Aorta (tissue), 5 donors: ENCODE measurements at regions of chr6 and their contacts with region 1.

Region 1: GRCh38 chr6:90478789-90479602 is 107.9 kb downstream of the MAP3K7 start:
- DNase-seq: peak; percentile 91 to 93
- ATAC-seq: peak; percentile 97
- H3K4me3 ChIP-seq: no peak overlapping the region
- H3K27ac ChIP-seq: no peak overlapping the region
- H3K4me1 ChIP-seq: no peaks in the 10 kb centered on the region
- H3K27me3 ChIP-seq: no peaks in the 10 kb centered on the region

Region 2: DNA sequence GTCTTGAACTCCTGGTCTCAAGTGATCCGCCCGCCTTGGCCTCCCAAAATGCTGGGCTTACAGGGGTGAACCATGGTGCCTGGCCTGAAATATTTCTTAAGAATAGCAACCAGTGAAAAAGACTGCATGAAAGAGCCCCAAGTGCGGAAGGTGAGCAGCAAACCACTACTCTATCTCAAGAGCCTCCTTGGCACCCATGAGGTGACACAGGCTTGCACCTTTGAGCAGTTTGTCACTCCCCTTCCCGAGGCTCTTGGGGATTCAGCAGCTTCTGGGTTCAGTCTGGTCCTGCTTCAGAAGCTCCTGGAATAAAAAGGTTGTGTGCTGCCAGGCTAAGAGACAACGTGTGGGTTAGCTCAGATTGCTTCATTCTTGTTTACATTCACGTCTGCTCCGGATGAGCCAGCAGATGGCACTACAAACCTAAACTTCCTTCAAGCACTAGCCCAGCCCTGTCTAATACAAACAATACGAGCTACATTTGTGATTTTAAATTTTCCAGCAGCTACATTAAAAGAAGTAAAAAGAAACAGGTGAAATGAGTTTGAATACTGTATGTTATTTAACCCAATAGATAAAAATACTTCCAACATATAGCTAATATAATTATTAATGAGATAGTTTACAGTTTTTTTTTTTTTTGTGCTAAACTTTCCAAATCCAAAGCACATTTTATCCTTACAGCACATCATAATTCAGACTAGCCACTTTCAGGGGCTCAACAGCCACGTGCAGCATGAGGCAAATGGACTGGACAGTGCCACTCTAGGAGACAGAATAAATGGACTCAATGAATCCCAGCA is 538.6 kb before region 1 on chr6:
- intact Hi-C with region 1: loop called (anchors 2 kb)
- DNase-seq: peak in 1 of 2 donors; percentile 72
- ATAC-seq: peak; percentile 87
- H3K4me3 ChIP-seq: no peak overlapping the region
- H3K27ac ChIP-seq: no peak overlapping the region
- H3K4me1 ChIP-seq: peaks cover 0 to 3% of the 10 kb centered on the region in 2 donors
- H3K27me3 ChIP-seq: no peaks in the 10 kb centered on the region

Region 3: GRCh38 chr6:89970609-89971337 is 508.2 kb before region 1 on chr6:
- intact Hi-C with region 1: loop called in 1 of 2 experiments (anchors 2 kb)
- DNase-seq: no peak
- ATAC-seq: peak; percentile 63
- H3K4me3 ChIP-seq: no peak overlapping the region
- H3K27ac ChIP-seq: no peak overlapping the region
- H3K4me1 ChIP-seq: no peaks in the 10 kb centered on the region
- H3K27me3 ChIP-seq: no peaks in the 10 kb centered on the region

Region 4: GRCh38 chr6:90285611-90286381 is 193.2 kb before region 1 on chr6:
- intact Hi-C with region 1: loop called in 1 of 2 experiments (anchors 5 kb)
- DNase-seq: peak; percentile 90 to 92
- ATAC-seq: peak; percentile 95
- H3K4me3 ChIP-seq: no peak overlapping the region
- H3K27ac ChIP-seq: no peak overlapping the region
- H3K4me1 ChIP-seq: peaks cover 3% of the 10 kb centered on the region in 2 donors
- H3K27me3 ChIP-seq: no peaks in the 10 kb centered on the region

Region 5: DNA sequence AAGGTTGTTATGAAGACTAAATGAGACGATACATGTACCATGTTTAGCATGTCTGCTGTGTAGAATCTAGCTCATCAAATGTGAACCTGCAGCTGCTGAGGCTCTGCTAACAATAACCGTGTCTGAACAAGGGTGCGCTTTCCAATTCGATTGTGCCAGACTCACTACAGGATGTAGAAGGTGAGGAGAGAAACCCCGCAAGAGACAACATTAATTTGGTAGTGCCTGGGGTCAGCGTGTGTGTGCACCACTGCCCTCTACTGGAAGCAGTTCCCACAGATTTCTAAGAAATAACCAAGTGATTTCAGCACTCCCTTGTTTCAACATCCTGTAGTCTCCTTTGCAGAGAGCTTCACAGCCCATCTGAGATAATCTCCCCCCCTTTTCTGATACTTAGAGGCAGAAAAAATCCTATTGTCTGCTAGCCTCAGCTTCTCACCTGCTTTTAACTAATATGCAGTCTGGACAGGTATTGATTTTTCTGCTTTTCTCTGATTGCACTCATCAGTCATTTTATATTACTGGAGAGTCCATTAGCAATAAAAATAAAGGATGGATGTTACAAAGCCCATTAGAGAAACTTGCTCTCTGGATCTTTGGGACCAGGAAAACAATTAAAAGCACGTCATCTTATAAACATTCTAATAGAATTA is 85.6 kb before region 1 on chr6:
- intact Hi-C with region 1: loop called (anchors 5 kb)
- DNase-seq: no peak
- ATAC-seq: peak; percentile 72
- H3K4me3 ChIP-seq: no peak overlapping the region
- H3K27ac ChIP-seq: no peak overlapping the region
- H3K4me1 ChIP-seq: peaks cover 0 to 2% of the 10 kb centered on the region in 2 donors
- H3K27me3 ChIP-seq: no peaks in the 10 kb centered on the region

Region 6: GRCh38 chr6:90413867-90414266 is 65.1 kb before region 1 on chr6:
- intact Hi-C with region 1: no loop called
- DNase-seq: peak in 1 of 2 donors; percentile 46
- ATAC-seq: peak; percentile 49
- H3K4me3 ChIP-seq: peak overlapping the region in 1 of 2 donors; percentile 1
- H3K27ac ChIP-seq: no peak overlapping the region
- H3K4me1 ChIP-seq: no peaks in the 10 kb centered on the region
- H3K27me3 ChIP-seq: no peaks in the 10 kb centered on the region